ENCODE measurements at regions of chr7 and their contacts with region 1.

Region 1: DNA sequence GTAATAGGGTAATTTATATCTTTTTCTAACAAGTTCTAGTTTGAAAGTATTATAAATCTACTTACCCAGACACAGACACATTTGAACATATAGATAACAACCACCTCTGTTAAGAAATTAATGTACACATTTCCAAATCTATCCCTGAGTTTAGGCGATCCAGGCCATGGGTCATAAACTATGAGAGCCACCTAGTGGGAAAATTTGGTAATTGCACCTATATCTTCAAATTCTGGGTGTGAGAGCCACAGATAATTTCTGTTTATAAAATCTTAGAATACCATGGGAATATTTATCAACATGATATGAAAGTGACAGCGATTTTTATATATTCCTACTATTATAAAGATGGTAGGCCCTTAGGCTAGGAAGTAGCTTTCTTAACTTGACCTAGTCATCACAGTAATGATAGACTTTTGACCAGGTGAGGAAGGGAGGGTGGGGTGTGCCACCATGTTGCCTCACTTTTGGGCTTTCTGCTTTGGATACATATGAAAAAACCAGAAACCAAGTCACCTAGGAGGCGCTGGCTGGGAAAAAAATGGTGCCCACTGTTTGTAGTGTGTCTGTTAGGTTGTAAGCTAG is 8.0 kb upstream of the EPHA1 start:
- DNase-seq: peak; percentile 13
- H3K4me3 Mint-ChIP-seq: no peak overlapping the region
- H3K27ac Mint-ChIP-seq: no peak overlapping the region
- H3K4me1 Mint-ChIP-seq: no peaks in the 10 kb centered on the region
- H3K27me3 Mint-ChIP-seq: peaks cover 3% of the 10 kb centered on the region

Region 2: GRCh38 chr7:143299840-143300239 is 116.8 kb before region 1 on chr7:
- CTCF ChIA-PET with region 1: interaction called, 10 read pairs
- POLR2A ChIA-PET with region 1: no interaction called
- DNase-seq: peak; percentile 67
- H3K4me3 Mint-ChIP-seq: no peak overlapping the region
- H3K27ac Mint-ChIP-seq: peak overlapping the region; percentile 47
- H3K4me1 Mint-ChIP-seq: peaks cover 72% of the 10 kb centered on the region
- H3K27me3 Mint-ChIP-seq: no peaks in the 10 kb centered on the region

Region 3: GRCh38 chr7:143401131-143401664 is 15.5 kb before region 1 on chr7:
- CTCF ChIA-PET with region 1: interaction called, 17 read pairs
- POLR2A ChIA-PET with region 1: no interaction called
- DNase-seq: no peak
- H3K4me3 Mint-ChIP-seq: no peak overlapping the region
- H3K27ac Mint-ChIP-seq: no peak overlapping the region
- H3K4me1 Mint-ChIP-seq: no peaks in the 10 kb centered on the region
- H3K27me3 Mint-ChIP-seq: no peaks in the 10 kb centered on the region